ENCODE measurements at regions of chr7 and their contacts with region 1.

Region 1: DNA sequence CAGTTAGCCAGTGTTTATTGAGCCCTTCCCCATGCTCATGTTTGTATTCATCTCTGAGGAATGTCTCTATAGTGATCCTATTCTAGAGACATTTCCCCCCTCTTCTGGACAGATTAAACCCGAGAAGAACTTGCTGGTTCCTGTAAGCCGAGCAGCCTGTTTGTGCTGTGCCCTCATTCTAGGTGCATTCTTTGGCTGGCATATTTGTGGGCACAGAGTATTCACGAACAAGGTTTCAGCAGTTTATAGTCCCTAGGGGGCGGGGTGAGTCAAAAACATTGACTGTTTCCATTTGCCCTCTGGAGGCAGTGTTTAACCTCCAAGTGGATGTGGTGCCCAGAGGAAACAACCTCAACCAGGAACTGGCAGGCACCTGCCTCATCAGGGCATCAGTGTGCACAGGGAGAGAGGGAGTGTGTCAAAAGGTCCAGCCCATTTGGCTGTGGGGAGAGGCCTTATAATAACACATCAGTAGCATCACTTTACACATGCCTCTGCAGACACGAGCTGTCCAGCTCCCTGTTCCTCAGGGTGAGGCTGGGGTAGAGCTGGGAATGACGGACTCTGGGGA is 273.3 kb upstream of the LRGUK start:
- DNase-seq: peak; percentile 98
- H3K4me3 ChIP-seq: no peak overlapping the region
- H3K27ac ChIP-seq: peak overlapping the region; percentile 96
- H3K4me1 ChIP-seq: peaks cover 45% of the 10 kb centered on the region
- H3K27me3 ChIP-seq: no peaks in the 10 kb centered on the region
- CTCF ChIP-seq: peak; percentile 66 to 70

Region 2: GRCh38 chr7:133344275-133344674 is 509.5 kb before region 1 on chr7:
- CTCF ChIA-PET with region 1: no interaction called
- dilution Hi-C with region 1: no loop called
- in situ Hi-C with region 1: no loop called
- intact Hi-C with region 1: loop called (anchors 10 kb)
- DNase-seq: no peak
- H3K4me3 ChIP-seq: no peak overlapping the region
- H3K27ac ChIP-seq: no peak overlapping the region
- H3K4me1 ChIP-seq: no peaks in the 10 kb centered on the region
- H3K27me3 ChIP-seq: no peaks in the 10 kb centered on the region
- CTCF ChIP-seq: peak; percentile 26 to 44

Region 3: GRCh38 chr7:133633062-133633461 is 220.7 kb before region 1 on chr7:
- CTCF ChIA-PET with region 1: no interaction called
- dilution Hi-C with region 1: no loop called
- in situ Hi-C with region 1: no loop called
- intact Hi-C with region 1: loop called (anchors 1 kb)
- DNase-seq: peak; percentile 88
- H3K4me3 ChIP-seq: peak overlapping the region in 2 of 3 experiments; percentile 8 to 33
- H3K27ac ChIP-seq: peak overlapping the region; percentile 47
- H3K4me1 ChIP-seq: peaks cover 8% of the 10 kb centered on the region
- H3K27me3 ChIP-seq: no peaks in the 10 kb centered on the region
- CTCF ChIP-seq: no peak

Region 4: DNA sequence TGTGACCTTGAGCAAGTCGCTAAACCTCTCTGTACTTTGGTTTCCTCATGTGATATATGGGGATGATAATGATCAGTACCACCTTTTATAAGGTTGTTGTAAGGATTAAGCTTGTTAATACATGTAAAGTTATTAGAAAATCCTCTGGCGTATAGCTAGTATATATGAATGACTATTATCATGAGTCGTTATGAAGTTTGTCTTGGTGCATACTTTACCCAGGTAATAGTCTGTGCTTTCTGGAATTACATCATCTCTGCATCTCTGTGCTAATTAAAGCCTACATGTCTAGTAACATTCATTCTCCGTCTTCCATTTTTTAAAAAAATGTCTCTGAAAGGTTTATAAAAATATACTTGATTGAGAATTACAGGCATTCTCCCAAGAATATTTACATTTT is 76.1 kb before region 1 on chr7:
- CTCF ChIA-PET with region 1: no interaction called
- dilution Hi-C with region 1: no loop called
- in situ Hi-C with region 1: no loop called
- intact Hi-C with region 1: loop called (anchors 1 kb)
- DNase-seq: peak; percentile 42
- H3K4me3 ChIP-seq: no peak overlapping the region
- H3K27ac ChIP-seq: no peak overlapping the region
- H3K4me1 ChIP-seq: peaks cover 2% of the 10 kb centered on the region
- H3K27me3 ChIP-seq: no peaks in the 10 kb centered on the region
- CTCF ChIP-seq: no peak

Region 5: DNA sequence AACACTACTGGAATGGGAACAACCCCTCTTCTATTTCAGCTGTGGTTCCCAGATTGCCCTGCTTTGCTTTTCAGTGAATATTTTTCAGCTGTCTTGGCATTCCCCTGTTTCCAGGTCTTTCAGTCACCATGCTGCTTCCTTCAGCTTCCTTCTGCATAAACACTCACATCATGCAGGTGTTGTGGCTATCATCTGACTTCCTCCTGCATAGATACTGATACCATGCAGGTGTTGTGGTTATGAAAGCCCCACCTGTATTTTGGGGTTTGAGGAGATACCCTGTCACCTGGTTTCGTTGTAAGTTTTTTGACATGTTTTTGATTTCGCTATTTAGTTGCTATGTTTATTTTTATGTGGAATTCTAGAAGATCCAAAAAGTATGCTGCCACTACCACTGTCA is 391.5 kb after region 1 on chr7:
- CTCF ChIA-PET with region 1: no interaction called
- dilution Hi-C with region 1: no loop called
- in situ Hi-C with region 1: no loop called
- intact Hi-C with region 1: no loop called
- DNase-seq: no peak
- H3K4me3 ChIP-seq: no peak overlapping the region
- H3K27ac ChIP-seq: no peak overlapping the region
- H3K4me1 ChIP-seq: no peaks in the 10 kb centered on the region
- H3K27me3 ChIP-seq: no peaks in the 10 kb centered on the region
- CTCF ChIP-seq: no peak

Region 6: DNA sequence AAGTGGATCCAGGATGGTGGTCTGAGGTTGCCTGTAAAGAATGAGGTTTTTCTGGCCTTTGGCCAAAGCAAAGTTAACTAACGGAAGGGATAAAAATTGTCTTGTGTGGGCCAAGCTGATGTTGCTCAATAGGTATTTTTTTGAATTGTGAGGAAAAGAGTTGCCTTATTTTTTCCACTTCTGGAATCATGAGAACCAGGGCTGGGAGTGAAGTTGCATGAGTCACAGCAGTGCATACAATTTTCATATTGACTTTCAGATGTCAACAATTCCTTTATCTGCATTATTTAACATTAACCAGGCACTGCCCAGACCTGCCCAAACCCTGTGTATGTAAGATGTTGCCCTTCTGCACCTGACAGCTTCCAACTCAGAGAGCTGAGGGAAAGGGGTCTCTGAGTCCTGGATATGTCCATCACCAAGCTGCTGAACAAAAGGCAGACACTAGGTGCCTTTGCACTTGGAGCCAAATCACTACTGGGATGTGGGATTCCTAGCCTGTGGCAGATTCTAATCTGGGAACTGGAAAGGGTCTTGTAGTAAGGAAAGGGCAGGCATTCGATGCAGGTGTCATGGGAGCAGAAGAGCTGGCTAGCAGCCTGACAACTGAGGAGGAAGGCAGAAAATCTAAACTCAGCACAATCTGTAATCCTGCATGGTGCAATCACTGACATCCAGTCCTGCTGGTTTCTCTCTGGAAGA is 515.2 kb after region 1 on chr7:
- CTCF ChIA-PET with region 1: no interaction called
- dilution Hi-C with region 1: no loop called
- in situ Hi-C with region 1: no loop called
- intact Hi-C with region 1: loop called (anchors 10 kb)
- DNase-seq: peak; percentile 74
- H3K4me3 ChIP-seq: no peak overlapping the region
- H3K27ac ChIP-seq: no peak overlapping the region
- H3K4me1 ChIP-seq: peaks cover 49% of the 10 kb centered on the region
- H3K27me3 ChIP-seq: no peaks in the 10 kb centered on the region
- CTCF ChIP-seq: no peak

Region 7: DNA sequence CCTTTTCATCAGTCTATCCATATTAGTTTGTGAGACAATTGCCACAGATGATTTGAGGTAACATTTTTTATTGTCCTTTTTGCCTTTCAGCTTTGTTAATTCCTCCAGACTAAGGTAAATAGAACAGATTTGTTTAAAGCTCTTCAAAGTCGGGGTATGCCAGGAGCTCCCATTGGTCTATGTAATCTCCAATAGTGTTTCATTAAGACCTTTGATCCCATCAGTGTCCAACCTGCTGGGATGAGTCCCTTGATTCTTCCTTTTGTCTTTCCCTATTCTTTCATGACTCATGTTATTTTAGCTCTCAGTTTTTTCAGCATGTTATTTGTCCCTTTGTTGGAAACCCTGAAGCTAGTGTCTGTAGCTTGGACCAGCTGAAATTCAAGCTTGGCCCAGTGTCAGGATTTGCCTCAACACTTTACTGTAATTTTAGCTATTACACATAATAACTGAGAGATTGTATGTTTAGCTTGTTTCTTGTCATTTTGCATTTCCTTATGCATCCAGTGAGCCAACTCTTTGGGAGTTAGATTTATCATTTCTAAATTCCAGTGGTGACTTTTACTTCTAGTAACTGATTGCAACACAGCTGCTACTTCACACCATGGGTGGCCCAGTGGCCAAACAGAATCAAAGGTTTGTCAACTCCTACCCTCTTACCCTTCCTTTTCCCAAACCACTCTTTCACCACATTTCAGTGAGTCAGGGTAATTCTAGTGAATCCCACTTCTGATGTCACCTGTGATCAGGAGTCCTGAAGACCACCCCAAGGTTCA is 1147.8 kb after region 1 on chr7:
- CTCF ChIA-PET with region 1: no interaction called
- dilution Hi-C with region 1: no loop called
- in situ Hi-C with region 1: no loop called
- intact Hi-C with region 1: no loop called
- DNase-seq: no peak
- H3K4me3 ChIP-seq: no peak overlapping the region
- H3K27ac ChIP-seq: no peak overlapping the region
- H3K4me1 ChIP-seq: no peaks in the 10 kb centered on the region
- H3K27me3 ChIP-seq: no peaks in the 10 kb centered on the region
- CTCF ChIP-seq: no peak